ENCODE measurements at regions of chr4 and their contacts with region 1.

Region 1: DNA sequence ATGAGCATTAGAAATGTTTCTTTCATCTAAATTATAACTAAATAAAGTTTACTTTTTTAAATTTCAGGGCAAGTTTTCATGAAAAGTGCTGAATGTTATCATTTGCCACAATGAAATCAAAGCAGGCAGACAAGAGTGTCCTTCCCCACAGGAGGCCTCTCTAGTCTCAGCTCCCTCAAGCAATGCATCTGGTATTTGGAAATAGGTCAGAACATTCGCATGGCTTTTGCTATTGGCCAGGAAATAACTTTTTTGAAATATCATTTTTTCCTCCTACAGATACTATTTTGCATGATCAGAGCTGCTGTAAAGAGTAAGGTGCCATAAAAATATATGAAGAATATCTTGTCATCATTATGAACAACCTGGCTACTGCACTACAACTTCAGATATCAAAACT is 41.1 kb downstream of the MAD2L1 start:
- DNase-seq: no peak
- H3K4me3 ChIP-seq: no peak overlapping the region
- H3K27ac ChIP-seq: no peak overlapping the region
- H3K27me3 ChIP-seq: no peaks in the 10 kb centered on the region
- CTCF ChIP-seq: no peak

Region 2: DNA sequence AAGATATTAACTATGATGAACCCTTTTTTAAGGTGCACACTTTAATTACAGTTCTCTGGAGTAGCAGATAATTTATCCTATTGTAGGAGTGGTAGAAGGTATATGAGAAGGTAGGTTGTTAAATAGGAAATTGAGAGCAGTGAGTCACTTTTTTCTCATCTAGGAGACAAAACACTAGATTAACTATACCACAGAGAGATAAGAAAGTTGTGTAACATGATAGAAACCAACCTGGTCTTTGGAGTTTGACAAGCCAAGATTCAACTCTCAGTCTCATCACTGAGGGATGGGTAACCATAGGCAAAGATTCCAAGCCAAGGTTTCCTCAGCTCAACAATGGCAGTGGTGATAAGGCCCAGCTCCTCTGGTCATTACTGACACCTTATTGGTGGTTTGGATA is 62.9 kb before region 1 on chr4:
- CTCF ChIA-PET with region 1: no interaction called
- POLR2A ChIA-PET with region 1: no interaction called
- DNase-seq: no peak
- H3K4me3 ChIP-seq: no peak overlapping the region
- H3K27ac ChIP-seq: no peak overlapping the region
- H3K27me3 ChIP-seq: no peaks in the 10 kb centered on the region
- CTCF ChIP-seq: no peak

Region 3: GRCh38 chr4:120009722-120010121 is 15.8 kb before region 1 on chr4:
- CTCF ChIA-PET with region 1: interaction called, 10 read pairs
- POLR2A ChIA-PET with region 1: no interaction called
- DNase-seq: peak; percentile 61
- H3K4me3 ChIP-seq: no peak overlapping the region
- H3K27ac ChIP-seq: no peak overlapping the region
- H3K27me3 ChIP-seq: no peaks in the 10 kb centered on the region
- CTCF ChIP-seq: no peak

Region 4: GRCh38 chr4:120096508-120097297 is 71.2 kb after region 1 on chr4:
- CTCF ChIA-PET with region 1: no interaction called
- POLR2A ChIA-PET with region 1: no interaction called
- DNase-seq: no peak
- H3K4me3 ChIP-seq: no peak overlapping the region
- H3K27ac ChIP-seq: no peak overlapping the region
- H3K27me3 ChIP-seq: no peaks in the 10 kb centered on the region
- CTCF ChIP-seq: no peak

Region 5: DNA sequence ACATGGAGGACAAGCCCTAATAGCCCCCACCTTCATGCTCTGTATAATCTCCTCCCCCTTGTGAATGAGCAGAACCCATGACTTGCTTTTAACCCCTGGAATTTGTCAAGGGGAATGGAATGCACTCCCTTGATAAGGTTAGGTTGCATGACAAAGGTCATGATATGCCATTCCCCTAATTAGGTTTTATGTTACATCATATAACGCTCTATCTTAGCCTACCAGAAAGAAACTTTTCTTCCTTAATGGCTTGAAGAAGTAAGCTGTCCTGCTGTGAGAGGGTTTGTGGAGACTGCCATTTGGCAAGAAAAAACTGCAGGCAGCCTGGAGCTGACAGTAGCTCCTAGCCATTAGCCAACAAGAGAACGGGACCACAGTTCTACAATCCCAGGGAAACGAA is 440.9 kb after region 1 on chr4:
- CTCF ChIA-PET with region 1: no interaction called
- POLR2A ChIA-PET with region 1: no interaction called
- DNase-seq: no peak
- H3K4me3 ChIP-seq: no peak overlapping the region
- H3K27ac ChIP-seq: no peak overlapping the region
- H3K27me3 ChIP-seq: no peaks in the 10 kb centered on the region
- CTCF ChIP-seq: no peak

Measured in AG04450 (cell line).